ENCODE measurements at regions of chr4 and their contacts with region 1.

Region 1: GRCh38 chr4:110139815-110140214 is 58.6 kb downstream of the ELOVL6 start:
- DNase-seq: no peak
- ATAC-seq: no peak
- H3K4me3 ChIP-seq: no peak overlapping the region
- H3K27ac ChIP-seq: no peak overlapping the region
- H3K4me1 ChIP-seq: no peaks in the 10 kb centered on the region
- H3K27me3 ChIP-seq: no peaks in the 10 kb centered on the region
- CTCF ChIP-seq: no peak
- EP300 ChIP-seq: no peak
- POLR2A ChIP-seq: no peak
- RAD21 ChIP-seq: no peak

Region 2: DNA sequence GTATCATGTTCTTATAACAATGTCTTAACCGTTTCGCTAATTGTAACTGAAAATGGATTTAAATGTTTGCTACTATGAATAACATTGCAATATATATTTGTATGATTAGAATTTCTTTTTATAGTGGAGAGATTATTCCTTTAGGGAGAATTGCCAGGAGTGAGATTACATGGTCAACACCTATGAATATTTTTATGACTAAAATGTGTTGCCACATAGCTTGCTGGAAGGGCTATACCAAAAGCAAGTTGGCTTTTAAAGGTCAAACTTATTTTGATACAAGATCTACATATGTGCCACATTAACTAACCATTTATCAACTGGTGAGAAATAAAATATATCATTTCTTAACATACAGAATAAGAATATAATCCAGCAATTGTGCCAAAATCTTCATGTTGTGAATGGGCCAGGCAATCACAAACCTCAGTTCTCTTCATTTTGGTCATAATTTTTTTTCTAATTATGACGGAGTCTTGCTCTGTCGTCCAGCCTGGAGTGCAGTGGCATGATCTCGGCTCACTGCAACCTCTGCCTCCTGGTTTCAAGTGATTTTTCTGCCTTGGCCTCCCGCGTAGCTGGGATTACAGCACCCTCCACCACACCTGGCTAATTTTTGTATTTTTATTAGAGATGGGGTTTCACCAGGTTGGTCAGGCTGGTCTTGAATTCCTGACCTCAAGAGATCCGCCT is 237.1 kb before region 1 on chr4:
- CTCF ChIA-PET with region 1: no interaction called
- POLR2A ChIA-PET with region 1: no interaction called
- RAD21 ChIA-PET with region 1: no interaction called
- SMC1A ChIA-PET with region 1: no interaction called
- in situ Hi-C with region 1: no loop called
- intact Hi-C with region 1: no loop called
- DNase-seq: no peak
- ATAC-seq: no peak
- H3K4me3 ChIP-seq: no peak overlapping the region
- H3K27ac ChIP-seq: no peak overlapping the region
- H3K4me1 ChIP-seq: no peaks in the 10 kb centered on the region
- H3K27me3 ChIP-seq: no peaks in the 10 kb centered on the region
- CTCF ChIP-seq: no peak
- EP300 ChIP-seq: no peak
- POLR2A ChIP-seq: no peak
- RAD21 ChIP-seq: no peak

Region 3: DNA sequence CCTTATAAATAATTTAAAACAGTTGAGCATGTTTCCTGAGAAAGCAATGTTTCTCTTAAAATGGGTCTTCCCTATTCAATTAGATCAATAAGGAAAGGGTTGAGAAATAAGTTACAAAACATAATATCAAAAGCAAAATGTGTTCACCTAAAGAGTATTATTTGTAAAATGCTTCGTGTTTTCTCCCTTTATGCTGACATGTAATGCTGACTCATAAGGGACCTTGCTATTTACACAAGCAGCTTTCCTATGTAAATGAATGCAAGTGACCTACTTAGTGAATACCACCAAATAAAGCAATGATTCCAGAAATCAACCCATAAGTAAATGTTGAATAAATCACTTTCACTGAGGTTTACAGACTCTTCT is 32.9 kb before region 1 on chr4:
- CTCF ChIA-PET with region 1: no interaction called
- POLR2A ChIA-PET with region 1: no interaction called
- RAD21 ChIA-PET with region 1: interaction called, 11 read pairs
- SMC1A ChIA-PET with region 1: interaction called, 3 read pairs
- in situ Hi-C with region 1: no loop called
- intact Hi-C with region 1: no loop called
- DNase-seq: no peak
- ATAC-seq: peak; percentile 79
- H3K4me3 ChIP-seq: no peak overlapping the region
- H3K27ac ChIP-seq: peak overlapping the region; percentile 14; the same call in 1 of the 2 replicates
- H3K4me1 ChIP-seq: peaks cover 26% of the 10 kb centered on the region
- H3K27me3 ChIP-seq: no peaks in the 10 kb centered on the region
- CTCF ChIP-seq: no peak
- EP300 ChIP-seq: peak in 1 of 2 experiments; percentile 30; a peak in 1 of 4 replicates
- POLR2A ChIP-seq: no peak
- RAD21 ChIP-seq: no peak

Region 4: GRCh38 chr4:110124711-110125110 is 15.1 kb before region 1 on chr4:
- CTCF ChIA-PET with region 1: interaction called, 3 read pairs
- POLR2A ChIA-PET with region 1: interaction called, 3 read pairs
- RAD21 ChIA-PET with region 1: interaction called, 3 read pairs
- SMC1A ChIA-PET with region 1: interaction called, 21 read pairs
- in situ Hi-C with region 1: no loop called
- intact Hi-C with region 1: no loop called
- DNase-seq: peak; percentile 40
- ATAC-seq: peak; percentile 75
- H3K4me3 ChIP-seq: no peak overlapping the region
- H3K27ac ChIP-seq: peak overlapping the region; percentile 15
- H3K4me1 ChIP-seq: peaks cover 3% of the 10 kb centered on the region; the same call in 1 of the 2 replicates
- H3K27me3 ChIP-seq: no peaks in the 10 kb centered on the region
- CTCF ChIP-seq: no peak
- EP300 ChIP-seq: no peak
- POLR2A ChIP-seq: no peak
- RAD21 ChIP-seq: no peak

Region 5: DNA sequence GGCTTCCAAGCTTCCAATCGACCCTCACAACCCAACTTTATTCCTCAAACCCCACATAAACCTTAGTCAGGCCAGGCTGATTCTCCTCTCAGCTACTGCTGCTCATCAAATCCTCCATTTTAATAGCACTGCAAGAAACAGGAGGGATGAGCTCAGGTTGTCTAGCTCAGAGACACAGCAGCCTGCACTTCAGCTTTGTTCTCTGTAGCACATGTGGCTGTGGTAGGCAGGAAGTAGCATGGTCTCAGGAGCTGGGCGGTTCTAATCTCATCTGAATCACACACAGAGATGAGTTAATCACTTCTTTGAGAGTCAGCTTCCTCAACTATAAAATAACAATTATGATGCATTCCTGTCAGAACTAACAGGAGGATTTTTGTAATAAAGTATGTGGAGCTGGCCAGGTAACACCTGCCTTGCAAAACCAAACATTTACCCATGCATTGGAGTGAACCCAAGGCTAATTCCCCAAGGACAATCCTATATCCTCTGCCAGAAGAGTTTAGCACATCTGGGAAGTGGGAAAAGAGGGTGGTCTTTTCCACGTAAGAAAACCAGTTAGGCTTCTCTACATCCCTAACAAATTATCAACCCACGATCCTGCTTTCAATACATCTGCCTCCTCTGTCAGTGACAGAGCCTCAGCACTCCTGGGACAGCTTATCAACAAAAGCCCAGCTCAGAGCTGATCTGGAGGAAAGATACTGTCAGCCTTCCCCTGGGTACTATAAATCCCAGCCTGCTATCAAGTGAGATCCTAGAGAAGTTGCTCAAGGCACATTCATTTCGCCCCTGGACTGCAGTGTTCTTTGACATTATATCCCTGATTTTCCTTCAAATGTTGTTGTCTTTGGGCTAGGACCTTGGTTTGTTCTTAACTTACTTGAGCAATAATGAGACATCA is 25.8 kb after region 1 on chr4:
- CTCF ChIA-PET with region 1: interaction called, 3 read pairs
- POLR2A ChIA-PET with region 1: no interaction called
- RAD21 ChIA-PET with region 1: no interaction called
- SMC1A ChIA-PET with region 1: interaction called, 27 read pairs
- in situ Hi-C with region 1: no loop called
- intact Hi-C with region 1: no loop called
- DNase-seq: no peak
- ATAC-seq: peak; percentile 60
- H3K4me3 ChIP-seq: no peak overlapping the region
- H3K27ac ChIP-seq: no peak overlapping the region
- H3K4me1 ChIP-seq: no peaks in the 10 kb centered on the region
- H3K27me3 ChIP-seq: no peaks in the 10 kb centered on the region
- CTCF ChIP-seq: no peak
- EP300 ChIP-seq: no peak
- POLR2A ChIP-seq: no peak; the same call in 1 of the 2 replicates
- RAD21 ChIP-seq: no peak

Region 6: GRCh38 chr4:110184140-110184790 is 44.5 kb after region 1 on chr4:
- CTCF ChIA-PET with region 1: no interaction called
- POLR2A ChIA-PET with region 1: no interaction called
- RAD21 ChIA-PET with region 1: no interaction called
- SMC1A ChIA-PET with region 1: no interaction called
- in situ Hi-C with region 1: no loop called
- intact Hi-C with region 1: no loop called
- DNase-seq: no peak
- ATAC-seq: peak; percentile 58
- H3K4me3 ChIP-seq: no peak overlapping the region
- H3K27ac ChIP-seq: no peak overlapping the region
- H3K4me1 ChIP-seq: peaks cover 7% of the 10 kb centered on the region; the same call in 1 of the 2 replicates
- H3K27me3 ChIP-seq: no peaks in the 10 kb centered on the region
- CTCF ChIP-seq: no peak
- EP300 ChIP-seq: no peak
- POLR2A ChIP-seq: no peak
- RAD21 ChIP-seq: no peak

Region 7: GRCh38 chr4:110270492-110271197 is 130.8 kb after region 1 on chr4:
- CTCF ChIA-PET with region 1: no interaction called
- POLR2A ChIA-PET with region 1: no interaction called
- RAD21 ChIA-PET with region 1: no interaction called
- SMC1A ChIA-PET with region 1: no interaction called
- in situ Hi-C with region 1: no loop called
- intact Hi-C with region 1: no loop called
- DNase-seq: no peak
- ATAC-seq: no peak
- H3K4me3 ChIP-seq: no peak overlapping the region
- H3K27ac ChIP-seq: no peak overlapping the region
- H3K4me1 ChIP-seq: peaks cover 3% of the 10 kb centered on the region; the same call in 1 of the 2 replicates
- H3K27me3 ChIP-seq: no peaks in the 10 kb centered on the region
- CTCF ChIP-seq: no peak
- EP300 ChIP-seq: no peak
- POLR2A ChIP-seq: no peak
- RAD21 ChIP-seq: no peak

Measured in GM12878 (cell line).